Caco-2 (cell line): ENCODE measurements at regions of chr12 and their contacts with region 1.

Region 1: DNA sequence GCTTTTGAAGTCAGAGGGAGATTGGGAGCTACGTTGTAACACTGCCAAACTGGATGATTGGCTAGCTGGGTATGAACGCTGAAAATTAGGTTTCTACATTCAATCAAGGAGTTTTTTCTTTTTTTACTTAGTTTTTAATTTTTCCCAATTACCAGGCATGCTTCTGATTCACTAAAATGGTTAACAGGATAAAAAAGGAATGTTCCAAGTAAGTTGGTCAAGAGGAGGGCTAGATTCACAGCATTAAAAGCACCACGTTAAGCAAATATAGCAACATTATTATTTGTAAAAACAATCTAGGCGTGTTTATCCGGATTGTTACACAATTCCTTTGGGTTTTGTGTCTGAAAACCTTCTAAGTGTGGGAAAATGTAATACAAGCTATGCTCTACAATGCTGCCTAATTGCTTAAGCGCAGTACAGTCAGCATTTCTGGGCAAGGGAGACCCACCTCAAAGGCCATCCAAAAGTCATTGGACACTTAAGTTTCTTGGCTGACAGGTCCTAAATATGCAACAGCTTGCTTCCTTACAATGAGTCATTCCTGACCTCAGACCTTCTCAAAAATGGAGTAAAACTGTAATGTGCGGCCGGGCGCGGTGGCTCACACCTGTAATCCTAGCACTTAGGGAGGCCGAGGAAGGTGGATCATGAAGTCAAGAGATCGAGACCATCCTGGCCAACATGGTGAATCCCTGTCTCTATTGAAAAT is 1.2 kb downstream of the RPLP0 start:
- DNase-seq: no peak
- H3K4me3 ChIP-seq: peak overlapping the region; percentile 81
- H3K4me3 Mint-ChIP-seq: peak overlapping the region; percentile 86
- H3K27ac Mint-ChIP-seq: peak overlapping the region; percentile 96
- H3K4me1 ChIP-seq: peaks cover 35% of the 10 kb centered on the region
- H3K4me1 Mint-ChIP-seq: peaks cover 13% of the 10 kb centered on the region
- H3K27me3 ChIP-seq: no peaks in the 10 kb centered on the region
- H3K27me3 Mint-ChIP-seq: no peaks in the 10 kb centered on the region
- CTCF ChIP-seq: no peak

Region 2: DNA sequence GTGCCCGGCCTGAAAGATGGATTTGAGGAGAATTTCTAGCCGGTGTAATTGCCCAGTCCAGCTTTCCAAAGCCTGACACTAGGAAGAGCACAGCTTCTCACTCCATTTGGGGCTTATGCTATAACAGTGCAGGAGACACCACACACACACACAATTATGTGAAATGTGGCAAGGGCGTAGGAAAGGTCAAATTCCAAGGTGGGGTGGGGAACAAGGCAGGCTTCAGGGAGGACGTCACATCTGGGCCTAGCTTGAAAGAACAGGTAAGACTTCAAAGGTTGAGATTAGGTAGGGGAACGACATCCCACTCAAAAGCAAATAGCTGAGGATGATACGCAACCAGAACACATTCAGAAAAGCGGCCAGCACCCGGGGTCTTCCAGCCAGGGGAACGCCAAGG is 94.8 kb before region 1 on chr12:
- CTCF ChIA-PET with region 1: interaction called, 5 read pairs
- POLR2A ChIA-PET with region 1: interaction called, 11 read pairs
- intact Hi-C with region 1: no loop called
- DNase-seq: peak; percentile 84 to 89
- H3K4me3 ChIP-seq: no peak overlapping the region
- H3K4me3 Mint-ChIP-seq: peak overlapping the region; percentile 55
- H3K27ac Mint-ChIP-seq: peak overlapping the region; percentile 97
- H3K4me1 ChIP-seq: peaks cover 29% of the 10 kb centered on the region
- H3K4me1 Mint-ChIP-seq: peaks cover 21% of the 10 kb centered on the region
- H3K27me3 ChIP-seq: no peaks in the 10 kb centered on the region
- H3K27me3 Mint-ChIP-seq: no peaks in the 10 kb centered on the region
- CTCF ChIP-seq: no peak

Region 3: DNA sequence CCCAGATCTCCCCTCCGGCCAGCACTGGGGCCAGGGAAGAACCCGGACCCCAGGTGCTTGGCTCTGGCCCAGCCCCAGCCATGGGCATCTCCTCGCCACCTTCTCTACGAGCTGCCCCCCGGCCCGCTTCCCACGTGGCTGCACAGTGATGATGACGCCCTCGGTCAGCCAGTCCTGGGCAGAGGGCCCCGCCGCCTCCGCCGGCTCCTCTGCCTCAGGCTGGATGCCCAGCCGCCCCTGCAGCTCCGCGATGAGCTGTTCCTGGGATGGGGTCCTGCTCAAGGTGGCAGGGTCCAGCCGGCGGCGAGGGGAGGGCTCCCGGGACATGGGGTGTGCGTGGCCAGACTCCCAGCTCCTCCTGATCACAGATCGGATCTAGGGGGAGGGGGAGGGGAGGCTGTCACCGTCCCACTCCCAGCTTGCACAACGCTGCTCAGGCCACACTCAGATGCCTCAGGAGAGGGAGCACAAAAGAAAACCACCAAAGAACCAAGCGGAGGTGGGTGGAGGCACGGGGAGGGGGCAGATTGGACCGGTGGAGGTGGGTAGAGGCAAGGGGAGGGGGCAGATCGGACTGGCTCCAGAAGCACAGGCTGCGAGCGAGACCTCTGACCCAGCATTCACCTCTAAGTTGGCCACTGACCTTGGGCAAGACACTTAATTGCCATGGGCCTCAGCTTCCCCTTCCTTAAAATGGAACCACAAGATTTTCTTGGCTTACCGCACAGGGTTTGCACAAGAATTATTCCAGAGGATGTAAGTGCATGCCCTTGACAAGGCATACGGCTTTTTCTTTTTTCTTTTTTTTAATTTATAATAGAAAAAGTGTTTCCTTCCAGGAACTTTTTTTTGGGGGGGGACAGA is 17.2 kb after region 1 on chr12:
- CTCF ChIA-PET with region 1: interaction called, 3 read pairs
- POLR2A ChIA-PET with region 1: interaction called, 11 read pairs
- intact Hi-C with region 1: no loop called
- DNase-seq: no peak
- H3K4me3 ChIP-seq: no peak overlapping the region
- H3K4me3 Mint-ChIP-seq: no peak overlapping the region
- H3K27ac Mint-ChIP-seq: no peak overlapping the region
- H3K4me1 ChIP-seq: no peaks in the 10 kb centered on the region
- H3K4me1 Mint-ChIP-seq: no peaks in the 10 kb centered on the region
- H3K27me3 ChIP-seq: no peaks in the 10 kb centered on the region
- H3K27me3 Mint-ChIP-seq: no peaks in the 10 kb centered on the region
- CTCF ChIP-seq: no peak

Region 4: DNA sequence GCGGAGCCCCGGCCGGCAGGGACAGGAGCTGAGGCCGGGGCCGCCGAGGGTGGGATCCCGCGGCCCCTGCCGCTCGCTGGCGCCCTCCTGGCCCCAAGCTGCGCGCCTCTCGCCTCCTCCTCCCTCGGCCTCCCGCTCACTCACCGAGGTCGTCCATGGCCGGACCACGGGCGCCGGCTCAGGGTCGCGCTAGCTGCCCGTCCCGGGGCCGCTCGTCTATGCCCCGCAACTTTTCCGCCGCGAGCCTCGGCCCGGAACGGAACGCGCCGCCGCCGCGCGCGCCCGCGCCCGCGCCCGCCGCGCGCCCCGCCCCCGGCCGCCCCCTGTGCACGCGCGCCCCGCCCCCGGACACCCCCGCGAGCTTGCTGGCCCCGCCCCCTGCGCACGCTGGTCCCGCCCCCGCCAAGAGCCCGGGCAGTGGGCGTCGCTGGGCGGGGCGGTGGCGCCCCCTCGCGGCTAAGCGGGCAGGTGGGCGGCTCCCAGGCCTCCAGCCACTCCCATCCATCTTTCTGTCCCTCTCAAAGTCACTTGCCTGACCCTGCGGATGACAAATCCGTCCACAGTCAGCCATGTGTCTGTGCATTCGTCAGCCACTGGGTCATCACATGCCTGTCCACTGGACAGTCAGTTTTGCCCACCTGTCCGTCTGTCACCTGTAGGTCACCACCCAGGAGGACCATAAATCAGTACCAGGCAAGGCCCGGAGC is 65.9 kb after region 1 on chr12 and contains the start of gene PXN:
- CTCF ChIA-PET with region 1: interaction called, 27 read pairs
- POLR2A ChIA-PET with region 1: interaction called, 35 read pairs
- intact Hi-C with region 1: loop called (anchors 2 kb)
- DNase-seq: peak; percentile 85 to 95
- H3K4me3 ChIP-seq: peak within 1 kb of the TSS; percentile 96
- H3K4me3 Mint-ChIP-seq: peak within 1 kb of the TSS; percentile 91
- H3K27ac Mint-ChIP-seq: peak within 1 kb of the TSS; percentile 86
- H3K4me1 ChIP-seq: peaks cover 42% of the 10 kb centered on the region
- H3K4me1 Mint-ChIP-seq: peaks cover 14% of the 10 kb centered on the region
- H3K27me3 ChIP-seq: no peaks in the 10 kb centered on the region
- H3K27me3 Mint-ChIP-seq: no peaks in the 10 kb centered on the region
- CTCF ChIP-seq: peak; percentile 66 to 84
- total RNA-seq, gene PXN: 150 and 162 TPM in 2 replicates

Region 5: GRCh38 chr12:120301962-120302815 is 102.4 kb after region 1 on chr12 and contains the start of gene SIRT4:
- CTCF ChIA-PET with region 1: no interaction called
- POLR2A ChIA-PET with region 1: interaction called, 12 read pairs
- intact Hi-C with region 1: no loop called
- DNase-seq: peak; percentile 89
- H3K4me3 ChIP-seq: peak within 1 kb of the TSS; percentile 70
- H3K4me3 Mint-ChIP-seq: peak within 1 kb of the TSS; percentile 91
- H3K27ac Mint-ChIP-seq: peak within 1 kb of the TSS; percentile 93
- H3K4me1 ChIP-seq: peaks cover 5% of the 10 kb centered on the region; the same call in 1 of the 2 replicates
- H3K4me1 Mint-ChIP-seq: no peaks in the 10 kb centered on the region
- H3K27me3 ChIP-seq: no peaks in the 10 kb centered on the region
- H3K27me3 Mint-ChIP-seq: no peaks in the 10 kb centered on the region
- CTCF ChIP-seq: peak; percentile 84 to 86
- total RNA-seq, gene SIRT4: 2.1 and 3.6 TPM in 2 replicates